Breast epithelium (tissue), 4 donors: ENCODE measurements at regions of chr19 and their contacts with region 1.

Region 1: DNA sequence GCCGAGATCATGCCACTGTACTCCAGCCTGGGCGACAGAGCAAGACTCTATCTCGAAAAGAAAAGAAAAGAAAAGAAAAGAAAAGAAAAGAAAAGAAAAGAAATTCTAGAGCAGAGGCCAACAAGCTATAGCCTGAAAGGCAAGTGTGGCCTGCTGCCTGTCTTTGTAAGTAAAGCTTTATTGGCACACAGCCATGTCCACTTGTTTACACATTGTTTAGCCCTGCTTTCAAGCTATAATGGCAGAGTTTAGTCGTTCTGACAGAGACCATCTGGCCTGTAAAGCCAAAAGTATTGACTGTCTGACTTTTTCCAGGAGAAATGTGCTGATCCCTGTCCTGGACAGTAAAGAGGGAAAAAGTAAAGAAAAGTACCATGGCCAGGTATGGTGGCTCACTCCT is 18.3 kb downstream of the NWD1 start:
- DNase-seq: no peak
- H3K4me3 ChIP-seq: no peak overlapping the region
- H3K27ac ChIP-seq: no peak overlapping the region
- H3K4me1 ChIP-seq: no peaks in the 10 kb centered on the region
- H3K27me3 ChIP-seq: no peaks in the 10 kb centered on the region
- CTCF ChIP-seq: no peak
- POLR2A ChIP-seq: no peak

Region 2: GRCh38 chr19:15976836-15977689 is 760.8 kb before region 1 on chr19:
- intact Hi-C with region 1: no loop called
- DNase-seq: no peak
- H3K4me3 ChIP-seq: no peak overlapping the region
- H3K27ac ChIP-seq: no peak overlapping the region
- H3K4me1 ChIP-seq: no peaks in the 10 kb centered on the region
- H3K27me3 ChIP-seq: peaks cover 0 to 36% of the 10 kb centered on the region in 2 donors
- CTCF ChIP-seq: no peak
- POLR2A ChIP-seq: no peak

Region 3: DNA sequence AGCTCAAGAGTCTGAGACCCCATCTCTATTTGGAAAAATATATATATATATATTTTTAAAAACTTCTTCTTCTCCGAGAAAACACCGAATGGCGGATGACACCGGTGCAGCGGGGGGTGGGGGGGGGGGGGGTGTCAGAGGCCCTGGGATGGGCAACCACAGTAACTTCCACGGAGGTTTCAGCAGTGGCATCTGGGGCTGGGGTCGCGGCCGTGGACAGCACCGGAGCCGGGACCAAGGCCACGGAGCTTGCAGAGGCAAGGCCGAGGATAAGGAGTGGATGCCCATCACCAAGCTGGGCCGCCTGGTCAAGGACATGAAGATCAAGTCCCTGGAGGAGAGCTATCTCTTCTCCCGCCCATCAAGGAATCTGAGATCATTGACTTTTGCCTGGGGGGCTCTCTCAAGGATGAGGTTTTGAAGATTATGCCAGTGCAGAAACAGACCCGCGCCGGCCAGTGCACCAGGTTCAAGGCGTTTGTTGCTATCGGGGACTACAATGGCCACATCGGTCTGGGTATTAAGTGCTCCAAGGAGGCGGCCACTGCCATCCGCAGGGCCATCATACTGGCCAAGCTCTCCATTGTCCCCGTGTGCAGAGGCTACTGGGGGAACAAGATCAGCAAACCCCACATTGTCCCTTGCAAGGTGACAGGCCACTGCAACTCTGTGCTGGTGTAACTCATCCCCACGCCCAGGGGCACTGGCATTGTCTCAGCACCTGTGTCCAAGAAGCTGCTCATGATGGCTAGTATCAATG is 325.1 kb before region 1 on chr19:
- intact Hi-C with region 1: loop called (anchors 5 kb)
- DNase-seq: no peak
- H3K4me3 ChIP-seq: no peak overlapping the region
- H3K27ac ChIP-seq: no peak overlapping the region
- H3K4me1 ChIP-seq: no peaks in the 10 kb centered on the region
- H3K27me3 ChIP-seq: no peaks in the 10 kb centered on the region
- CTCF ChIP-seq: no peak
- POLR2A ChIP-seq: no peak

Region 4: DNA sequence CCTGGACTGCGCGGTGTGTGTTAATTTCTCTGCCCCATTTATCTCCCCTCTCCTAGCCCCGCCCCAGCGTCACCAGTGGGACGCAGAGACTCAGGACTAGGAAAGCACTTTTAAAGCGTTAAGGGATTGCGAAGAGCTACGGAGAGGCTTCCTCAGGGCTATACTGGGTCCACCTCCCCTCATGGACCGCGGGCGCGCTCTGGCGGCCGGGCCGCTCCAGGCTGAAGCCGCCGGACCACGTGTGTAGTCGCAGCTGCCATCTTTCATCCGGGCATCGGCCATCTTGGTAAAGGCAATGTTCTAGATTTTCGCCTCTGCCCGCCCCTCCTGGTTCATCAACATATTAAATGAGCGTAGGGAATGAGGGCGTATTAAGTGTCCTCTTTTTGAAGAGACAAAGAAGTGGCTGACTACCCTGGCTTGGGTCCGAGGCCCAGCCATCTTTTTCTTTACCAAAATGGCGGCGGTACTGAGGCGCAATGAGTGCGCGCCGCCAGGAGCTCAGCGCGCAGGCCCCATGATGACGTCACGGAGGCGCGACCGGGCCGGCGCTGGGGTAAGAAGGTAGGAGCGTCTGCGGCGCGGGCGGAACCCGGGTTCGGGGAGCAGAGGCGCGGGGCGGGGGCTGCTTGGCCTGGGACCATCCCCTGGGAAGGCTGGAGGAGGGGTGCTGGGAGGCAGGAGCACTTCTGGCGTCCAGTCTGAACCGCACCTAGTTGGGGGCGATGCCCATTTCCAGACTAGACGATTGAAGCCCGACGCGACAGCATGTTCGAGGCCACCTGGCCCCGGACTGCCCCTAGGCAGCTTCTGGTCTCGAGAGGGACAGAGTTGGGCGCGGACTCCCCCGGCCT is 1194.8 kb after region 1 on chr19 and contains the start of gene CCDC124:
- intact Hi-C with region 1: loop called (anchors 5 kb)
- DNase-seq: peak; percentile 88 to 90
- H3K4me3 ChIP-seq: peak within 1 kb of the TSS; percentile 80 to 100 (median 82)
- H3K27ac ChIP-seq: peak within 1 kb of the TSS; percentile 93 to 94
- H3K4me1 ChIP-seq: peaks cover 6 to 8% of the 10 kb centered on the region in 2 donors
- H3K27me3 ChIP-seq: no peaks in the 10 kb centered on the region
- CTCF ChIP-seq: peak in 2 of 3 donors; percentile 74 to 91
- POLR2A ChIP-seq: peak; percentile 85
- total RNA-seq, gene CCDC124: 43.8 to 53.4 (median 47.9) TPM